ENCODE measurements at regions of chr21 and their contacts with region 1.

Region 1: GRCh38 chr21:44067011-44067839 is 40.0 kb upstream of the PWP2 start:
- DNase-seq: no peak
- H3K4me3 ChIP-seq: no peak overlapping the region
- H3K27ac ChIP-seq: no peak overlapping the region
- H3K4me1 ChIP-seq: no peaks in the 10 kb centered on the region
- H3K27me3 ChIP-seq: no peaks in the 10 kb centered on the region
- CTCF ChIP-seq: no peak
- POLR2A ChIP-seq: no peak

Region 2: DNA sequence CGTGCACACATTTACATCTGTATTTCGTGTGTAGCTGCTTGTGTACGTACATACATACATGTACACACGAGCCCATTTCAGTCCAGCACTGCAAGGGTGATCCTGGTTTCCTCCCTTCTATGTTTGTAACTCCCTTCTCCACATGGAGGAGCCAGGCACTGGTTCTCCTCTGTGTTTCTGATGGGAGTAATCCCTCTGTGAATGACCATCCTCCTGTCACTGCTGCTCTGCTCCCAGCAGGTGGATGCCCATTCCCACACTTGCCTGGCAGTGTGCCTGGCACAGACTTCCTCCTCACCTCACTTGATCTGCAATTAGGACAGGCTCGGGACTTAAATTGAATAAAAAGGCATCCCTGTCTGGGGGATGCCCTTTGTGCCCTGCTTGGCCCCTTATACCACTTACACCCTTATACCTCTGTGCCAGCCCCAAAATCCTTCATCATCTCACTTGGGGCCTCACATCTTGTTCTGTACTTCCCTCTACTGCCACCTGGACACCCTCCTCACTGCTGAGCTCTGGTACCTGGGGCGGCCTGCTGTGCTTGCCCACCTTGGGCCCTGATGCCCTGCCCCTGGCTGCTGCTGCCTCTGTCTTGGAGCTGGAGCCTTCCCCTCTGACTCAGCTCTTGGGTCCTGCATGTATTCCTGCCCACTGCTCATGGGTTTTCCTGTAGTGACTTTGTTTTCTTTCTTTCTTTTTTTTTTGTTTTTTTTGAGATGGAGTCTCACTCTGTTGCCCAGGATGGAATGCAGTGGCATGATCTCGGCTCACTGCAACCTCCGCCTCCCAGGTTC is 17.8 kb before region 1 on chr21:
- intact Hi-C with region 1: loop called (anchors 1 kb)
- DNase-seq: no peak
- H3K4me3 ChIP-seq: no peak overlapping the region
- H3K27ac ChIP-seq: no peak overlapping the region
- H3K4me1 ChIP-seq: no peaks in the 10 kb centered on the region
- H3K27me3 ChIP-seq: no peaks in the 10 kb centered on the region
- CTCF ChIP-seq: no peak
- POLR2A ChIP-seq: no peak